ENCODE measurements at regions of chr10 and their contacts with region 1.

Region 1: DNA sequence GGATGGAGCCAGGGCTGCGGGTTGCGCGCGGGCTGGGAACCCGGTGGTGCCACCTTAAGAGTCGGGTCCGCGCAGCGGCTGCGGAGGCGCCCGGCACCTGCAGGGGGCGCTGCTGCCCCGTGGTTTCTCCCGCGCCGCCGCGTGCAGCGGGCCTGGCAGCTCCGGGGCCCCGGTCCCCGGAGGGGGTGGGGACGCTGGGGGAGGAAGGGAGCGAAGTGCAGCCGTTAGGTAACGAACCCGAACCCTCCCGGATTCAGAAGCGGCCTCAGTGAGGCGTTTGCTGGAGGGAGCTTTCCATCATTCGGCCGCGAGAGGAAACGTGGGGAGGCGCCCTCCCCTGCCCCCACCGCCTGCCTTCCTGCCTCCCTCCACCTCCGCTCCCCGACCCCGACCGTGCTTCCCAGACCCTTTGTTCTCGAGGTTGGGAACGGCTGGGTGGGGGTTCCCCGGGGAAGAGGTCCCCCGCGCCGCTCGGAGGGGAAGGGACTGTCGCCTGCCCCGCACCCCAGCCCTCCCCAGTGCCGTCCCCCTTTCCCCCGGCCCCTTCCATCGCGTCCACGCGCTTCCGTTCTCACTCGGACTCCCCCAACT is 29.6 kb downstream of the SKIDA1 start:
- DNase-seq: peak; percentile 92
- ATAC-seq: peak; percentile 92

Region 2: DNA sequence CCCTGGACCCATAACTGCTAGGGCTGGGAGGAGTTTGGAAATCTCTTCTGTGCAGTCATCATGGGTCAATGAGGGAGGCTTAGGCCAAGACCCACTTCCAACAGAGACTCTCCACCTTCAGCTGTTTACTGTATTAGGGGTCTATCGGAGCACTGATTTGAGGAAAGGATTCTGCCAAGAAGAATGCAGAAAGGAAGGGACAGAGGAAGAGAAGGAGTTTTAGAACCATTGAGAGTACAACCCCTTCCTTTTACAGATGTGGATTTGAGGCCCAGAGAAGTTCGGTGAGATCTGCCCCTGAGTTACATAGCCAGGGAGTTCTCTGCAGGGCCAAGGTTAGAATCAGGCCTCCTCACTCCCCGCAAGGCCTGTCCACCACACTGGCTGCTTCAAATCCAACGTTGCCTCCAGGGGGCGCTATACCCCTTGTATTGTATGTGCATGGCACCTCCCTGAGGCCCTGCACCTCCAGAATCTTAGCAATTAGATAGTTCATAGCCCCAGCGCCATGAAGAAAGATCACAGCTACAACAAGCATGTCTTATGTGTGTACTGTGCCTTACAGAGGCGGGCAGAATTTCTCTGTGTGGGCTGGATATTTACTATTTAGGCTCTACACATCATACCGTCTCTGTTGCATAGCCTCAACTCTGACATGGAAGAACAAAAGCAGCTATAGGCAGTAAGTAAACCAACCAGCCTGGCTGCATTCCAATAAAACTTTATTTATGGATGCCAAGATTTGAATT is 217.2 kb before region 1 on chr10:
- intact Hi-C with region 1: loop called (anchors 2 kb)
- DNase-seq: peak; percentile 97
- ATAC-seq: peak; percentile 99

Region 3: GRCh38 chr10:21732067-21732772 is 236.4 kb after region 1 on chr10:
- intact Hi-C with region 1: loop called (anchors 5 kb)
- DNase-seq: peak; percentile 71
- ATAC-seq: peak; percentile 94